ENCODE measurements at regions of chr19 and their contacts with region 1.

Region 1: GRCh38 chr19:1672038-1672768 is 19.8 kb upstream of the TCF3 start:
- DNase-seq: peak; percentile 61
- ATAC-seq: peak; percentile 59
- H3K4me3 Mint-ChIP-seq: no peak overlapping the region
- H3K27ac Mint-ChIP-seq: no peak overlapping the region
- H3K4me1 Mint-ChIP-seq: peaks cover 15% of the 10 kb centered on the region
- H3K27me3 Mint-ChIP-seq: peaks cover 55% of the 10 kb centered on the region

Region 2: DNA sequence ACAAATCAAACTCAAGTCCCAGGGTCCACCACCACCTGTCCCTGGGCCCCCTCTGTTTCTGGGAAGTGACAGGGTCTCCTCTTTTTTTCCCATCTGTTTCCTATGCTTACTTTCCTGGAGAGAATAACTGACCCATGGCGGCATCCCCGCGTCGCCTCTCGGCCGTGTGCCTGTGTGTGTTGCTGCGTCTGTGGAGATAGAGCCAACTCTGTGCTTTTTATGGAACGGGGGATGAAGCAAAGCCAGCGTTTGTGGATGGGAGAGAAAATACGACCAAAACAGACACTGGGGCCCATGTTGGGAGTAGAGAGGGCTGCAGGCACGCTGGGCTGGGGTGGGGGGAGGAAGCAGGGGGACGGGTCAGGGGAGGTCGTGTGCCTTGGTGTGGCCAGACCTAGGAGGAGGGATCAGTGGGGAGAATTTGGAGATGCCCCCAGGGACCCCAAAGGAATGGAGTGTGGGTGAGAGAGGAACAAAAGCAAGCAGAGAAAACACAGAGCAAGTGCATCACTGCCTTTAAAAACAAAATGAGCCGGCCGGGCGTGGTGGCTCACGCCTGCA is 131.8 kb before region 1 on chr19:
- CTCF ChIA-PET with region 1: interaction called, 68 read pairs
- DNase-seq: no peak
- ATAC-seq: no peak
- H3K4me3 Mint-ChIP-seq: no peak overlapping the region
- H3K27ac Mint-ChIP-seq: no peak overlapping the region
- H3K4me1 Mint-ChIP-seq: no peaks in the 10 kb centered on the region
- H3K27me3 Mint-ChIP-seq: peaks cover 8% of the 10 kb centered on the region

Region 3: DNA sequence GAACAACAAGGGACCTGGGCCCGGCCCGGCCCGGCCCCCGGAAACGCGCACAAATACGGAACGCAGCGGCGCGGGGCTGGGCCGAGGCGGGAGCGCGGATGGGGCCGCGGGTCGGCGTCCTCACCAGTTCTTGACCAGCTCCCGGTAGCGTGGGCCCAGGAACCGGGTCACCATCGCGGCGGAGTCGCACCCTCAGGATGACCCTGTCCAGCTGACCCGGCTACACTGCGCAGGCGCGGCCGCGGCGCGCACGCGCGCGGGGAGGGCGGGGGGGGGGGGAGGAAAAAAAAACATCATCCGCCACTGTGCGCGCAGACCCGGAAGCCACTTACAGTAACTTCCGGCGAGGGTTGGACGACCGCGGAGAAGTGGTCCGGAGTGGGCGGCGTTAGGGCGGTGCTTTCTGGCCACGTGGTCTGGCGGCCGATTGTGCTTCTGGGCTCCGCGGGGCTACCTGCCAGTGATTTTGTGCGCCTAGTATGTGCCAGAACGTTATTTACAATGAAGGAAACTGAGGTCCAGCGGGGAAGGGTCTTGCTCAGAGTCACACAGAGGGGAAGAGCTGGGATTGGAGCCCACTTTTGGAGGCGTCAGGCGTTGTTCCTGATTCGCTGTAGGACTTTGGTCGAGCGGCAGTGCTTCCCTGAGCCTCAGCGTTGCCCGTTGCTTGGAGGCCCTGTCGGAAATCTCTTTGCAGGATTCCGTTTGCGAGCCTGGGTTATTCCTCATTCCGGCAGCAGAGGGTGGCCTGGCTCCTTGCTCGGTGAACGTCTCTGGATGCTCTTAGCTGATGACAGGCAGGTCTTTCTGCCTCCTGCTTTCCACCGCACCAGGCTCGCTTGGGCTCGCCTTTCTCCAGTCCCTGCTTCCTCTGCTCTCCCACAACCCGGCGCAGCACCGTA is 66.7 kb before region 1 on chr19 and contains the start of gene UQCR11:
- CTCF ChIA-PET with region 1: interaction called, 18 read pairs
- DNase-seq: peak; percentile 96
- ATAC-seq: peak; percentile 90
- H3K4me3 Mint-ChIP-seq: peak within 1 kb of the TSS; percentile 92
- H3K27ac Mint-ChIP-seq: peak within 1 kb of the TSS; percentile 98
- H3K4me1 Mint-ChIP-seq: peaks cover 54% of the 10 kb centered on the region
- H3K27me3 Mint-ChIP-seq: no peaks in the 10 kb centered on the region
- total RNA-seq, gene UQCR11: 192 to 196 TPM

Region 4: GRCh38 chr19:1767464-1767933 is 95.3 kb after region 1 on chr19:
- CTCF ChIA-PET with region 1: interaction called, 33 read pairs
- DNase-seq: peak; percentile 63
- ATAC-seq: peak; percentile 47
- H3K4me3 Mint-ChIP-seq: no peak overlapping the region
- H3K27ac Mint-ChIP-seq: no peak overlapping the region
- H3K4me1 Mint-ChIP-seq: no peaks in the 10 kb centered on the region
- H3K27me3 Mint-ChIP-seq: peaks cover 79% of the 10 kb centered on the region

Region 5: DNA sequence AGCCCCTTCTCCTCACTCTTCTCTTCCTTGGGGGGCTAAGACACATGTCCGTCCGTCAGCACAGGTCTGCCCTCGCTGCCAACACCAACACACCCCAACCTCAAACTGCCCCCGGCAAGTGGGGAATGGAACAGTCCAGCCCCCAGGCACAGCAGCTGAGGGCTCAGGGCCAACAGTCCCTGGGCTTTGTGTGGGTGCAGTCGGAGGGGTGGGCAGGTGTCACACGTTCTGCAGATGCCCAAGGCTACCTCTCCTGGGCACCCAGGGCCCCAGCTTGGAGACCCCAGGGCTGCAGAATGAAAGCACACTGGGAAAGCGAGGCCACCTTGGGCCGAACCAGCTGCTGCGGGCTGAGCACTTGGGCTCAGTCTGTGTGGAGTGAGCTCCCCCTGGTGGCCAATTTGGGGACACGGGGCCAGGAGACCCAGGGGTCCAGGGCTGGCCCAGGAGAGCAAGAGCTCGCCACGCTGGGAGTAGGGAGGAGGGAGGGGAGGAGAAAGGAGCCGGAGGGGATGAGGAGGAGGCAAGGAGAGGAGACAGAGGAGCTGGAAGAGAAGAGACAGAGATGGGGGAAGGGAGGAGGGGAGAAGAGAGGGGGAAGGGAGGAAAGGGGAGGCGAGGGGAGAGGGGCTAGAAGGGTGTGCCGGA is 153.8 kb after region 1 on chr19:
- CTCF ChIA-PET with region 1: interaction called, 21 read pairs
- DNase-seq: peak; percentile 81
- ATAC-seq: peak; percentile 87
- H3K4me3 Mint-ChIP-seq: no peak overlapping the region
- H3K27ac Mint-ChIP-seq: no peak overlapping the region
- H3K4me1 Mint-ChIP-seq: no peaks in the 10 kb centered on the region
- H3K27me3 Mint-ChIP-seq: no peaks in the 10 kb centered on the region